Tibial artery (tissue), 4 donors: ENCODE measurements at regions of chr6 and their contacts with region 1.

Region 1: DNA sequence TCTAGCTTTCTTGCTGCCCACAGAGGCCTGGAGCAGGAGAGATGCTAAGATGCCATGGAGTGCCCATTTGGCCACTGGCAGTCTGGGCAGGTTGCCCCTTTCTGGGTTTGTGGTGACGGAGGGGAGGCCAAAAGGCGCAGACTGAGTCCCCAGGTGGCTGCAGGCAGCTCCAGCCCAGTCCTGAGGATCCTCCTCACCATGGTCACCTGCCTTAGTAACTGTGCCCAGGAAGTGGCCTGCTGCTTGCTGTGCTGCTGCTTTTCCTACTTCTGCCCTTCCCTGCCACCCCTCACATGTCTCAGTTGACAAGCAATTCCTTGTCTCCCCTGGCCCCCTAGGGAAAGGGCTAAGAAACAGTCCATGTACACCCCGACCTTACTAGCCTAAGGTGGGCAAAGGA is 35.3 kb upstream of the KIFC1 start:
- DNase-seq: no peak
- H3K4me3 ChIP-seq: no peak overlapping the region
- H3K27ac ChIP-seq: no peak overlapping the region
- H3K4me1 ChIP-seq: no peaks in the 10 kb centered on the region
- H3K27me3 ChIP-seq: peaks cover 0 to 21% of the 10 kb centered on the region in 2 donors
- CTCF ChIP-seq: no peak

Region 2: DNA sequence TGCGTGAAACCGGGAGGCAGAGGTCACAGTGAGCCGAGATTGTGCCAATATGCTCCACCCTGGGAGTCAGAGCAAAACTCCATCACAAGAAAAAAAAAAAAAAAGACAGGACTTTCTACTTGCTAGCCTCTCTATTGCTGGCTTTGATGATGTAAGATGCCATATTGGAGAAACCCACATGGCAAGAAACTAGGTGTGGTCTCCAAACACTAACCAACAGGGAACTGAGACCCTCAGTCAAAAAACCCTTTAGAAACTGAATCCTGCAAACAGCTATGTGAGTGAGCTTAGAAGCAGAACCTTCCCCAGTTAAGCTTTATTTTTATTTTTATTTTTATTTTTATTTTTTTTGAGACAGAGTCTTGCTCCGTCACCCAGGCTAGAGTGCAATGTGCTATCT is 20.4 kb before region 1 on chr6:
- intact Hi-C with region 1: loop called (anchors 2 kb)
- DNase-seq: no peak
- H3K4me3 ChIP-seq: no peak overlapping the region
- H3K27ac ChIP-seq: no peak overlapping the region
- H3K4me1 ChIP-seq: no peaks in the 10 kb centered on the region
- H3K27me3 ChIP-seq: no peaks in the 10 kb centered on the region
- CTCF ChIP-seq: no peak

Region 3: GRCh38 chr6:33425668-33426577 is 69.6 kb after region 1 on chr6:
- intact Hi-C with region 1: no loop called
- DNase-seq: peak; percentile 82 to 94
- H3K4me3 ChIP-seq: peak overlapping the region; percentile 61 to 77
- H3K27ac ChIP-seq: peak overlapping the region; percentile 95 to 97
- H3K4me1 ChIP-seq: peaks cover 0 to 54% (median 38%) of the 10 kb centered on the region in 4 donors
- H3K27me3 ChIP-seq: no peaks in the 10 kb centered on the region
- CTCF ChIP-seq: peak; percentile 42 to 69